Posterior vena cava (tissue), 2 donors: ENCODE measurements at regions of chr16 and their contacts with region 1.

Region 1: DNA sequence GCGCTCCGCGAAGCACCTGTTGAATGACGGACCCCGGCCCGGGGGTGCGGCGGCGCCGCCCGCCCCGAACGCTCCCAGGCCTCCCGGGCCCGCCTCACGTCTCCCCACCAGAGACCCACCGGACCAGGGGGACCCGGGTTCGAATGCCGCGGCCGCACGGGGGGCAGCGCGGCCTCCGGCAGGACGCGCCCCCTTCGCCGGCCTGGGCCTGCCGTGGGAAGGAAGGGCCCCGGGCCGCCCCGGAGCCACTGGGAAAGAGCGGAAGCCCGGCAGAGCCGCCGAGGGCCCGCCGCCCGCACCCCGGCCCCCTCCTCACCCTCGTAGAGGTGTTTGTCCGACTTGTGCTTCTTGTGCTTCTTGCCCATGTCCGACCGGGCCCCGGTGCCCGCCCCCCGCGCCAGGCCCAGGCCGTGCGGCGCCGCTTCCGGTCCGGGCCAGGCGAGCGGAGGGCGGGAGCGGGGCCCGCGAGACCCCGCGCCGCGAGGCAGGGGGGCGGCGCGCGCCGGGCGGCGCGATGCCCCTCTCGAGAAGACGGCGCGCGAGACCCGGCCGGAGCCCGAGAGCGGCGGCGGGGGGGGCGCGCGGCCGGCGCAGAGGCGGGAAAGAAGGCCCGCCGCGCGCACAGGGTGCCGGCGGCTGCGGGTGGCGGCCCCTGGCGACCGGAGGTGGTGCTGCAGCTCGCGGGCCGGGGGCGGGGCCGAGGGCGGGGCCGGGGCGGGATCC is at the start of gene BRD7:
- DNase-seq: peak; percentile 85
- total RNA-seq, gene BRD7: 54.5 to 71.3 TPM

Region 2: DNA sequence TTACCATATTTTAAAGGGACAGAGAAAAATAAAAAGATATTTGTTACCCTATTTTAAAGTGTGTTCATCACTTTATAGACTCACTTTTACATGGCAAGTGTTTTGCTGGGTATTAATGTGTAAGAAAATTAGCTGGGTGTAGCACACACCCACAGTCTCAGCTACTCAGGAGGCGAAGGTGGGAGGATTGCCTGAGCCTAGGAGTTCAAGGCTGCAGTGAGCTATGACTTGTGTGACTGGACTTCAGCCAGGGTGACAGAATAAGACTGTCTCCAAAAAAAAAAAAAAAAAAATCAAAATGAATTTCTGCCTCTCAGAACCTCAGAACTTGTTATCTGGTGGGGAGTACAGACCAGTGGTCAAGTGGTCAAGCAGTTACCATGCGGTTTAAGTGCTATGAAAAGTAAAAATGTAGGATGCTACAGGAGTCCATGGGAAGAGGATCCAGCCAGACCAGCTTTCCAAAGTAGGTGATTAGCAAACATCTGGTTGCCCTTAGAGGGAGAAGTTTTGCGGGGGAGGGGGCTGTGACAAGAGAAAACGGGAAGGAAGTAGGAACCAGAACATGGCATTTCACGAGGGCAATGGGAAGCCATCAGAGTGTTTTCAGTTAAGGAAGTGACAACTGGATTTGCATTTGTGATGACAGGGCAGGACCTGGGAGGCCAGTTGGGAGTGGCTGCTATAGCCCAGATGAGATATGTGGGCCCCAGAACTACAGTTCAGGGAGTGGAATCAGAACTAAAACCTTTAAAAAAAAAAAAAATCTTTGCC is 329.6 kb before region 1 on chr16:
- intact Hi-C with region 1: loop called in 1 of 2 experiments (anchors 10 kb)
- DNase-seq: no peak

Region 3: DNA sequence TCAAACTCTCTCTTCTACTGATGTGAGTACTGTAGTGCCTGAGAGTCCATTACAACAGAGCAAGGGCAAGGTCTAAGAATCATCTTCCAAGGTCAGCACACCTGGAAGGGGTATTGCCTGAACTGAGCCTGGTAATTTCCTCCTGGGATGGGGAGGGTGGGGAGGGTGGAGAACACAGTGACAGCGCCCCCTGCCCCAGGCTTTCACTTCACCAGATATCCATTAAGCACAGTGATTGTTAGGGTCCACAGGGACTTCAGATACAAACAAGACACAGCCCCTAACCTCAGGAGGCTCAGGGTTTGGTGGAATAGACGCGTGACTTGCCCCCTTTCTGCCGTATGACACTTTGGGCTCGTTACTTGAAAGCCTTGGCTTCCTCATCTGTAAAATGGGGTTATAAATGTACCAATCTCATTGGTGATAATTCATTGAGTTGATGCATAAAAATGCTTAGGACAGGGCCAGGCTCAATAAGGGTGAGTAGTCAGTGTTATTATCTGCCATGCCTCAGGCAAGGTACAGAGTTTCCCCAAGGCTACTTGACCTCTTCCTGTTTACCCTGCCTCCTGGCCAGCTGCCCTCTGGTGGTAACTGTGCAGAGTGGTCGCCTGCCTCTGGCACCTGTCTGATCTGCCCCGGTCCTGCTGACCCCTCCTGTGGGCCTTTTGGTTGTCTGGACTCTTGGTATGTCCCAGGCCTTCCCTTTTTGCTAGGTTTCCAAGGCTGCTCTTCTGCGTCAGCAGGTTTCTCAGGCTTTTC is 13.3 kb after region 1 on chr16:
- intact Hi-C with region 1: no loop called
- DNase-seq: no peak

Region 4: GRCh38 chr16:50665128-50665878 is 296.7 kb after region 1 on chr16:
- intact Hi-C with region 1: loop called (anchors 5 kb)
- DNase-seq: peak; percentile 93

Region 5: DNA sequence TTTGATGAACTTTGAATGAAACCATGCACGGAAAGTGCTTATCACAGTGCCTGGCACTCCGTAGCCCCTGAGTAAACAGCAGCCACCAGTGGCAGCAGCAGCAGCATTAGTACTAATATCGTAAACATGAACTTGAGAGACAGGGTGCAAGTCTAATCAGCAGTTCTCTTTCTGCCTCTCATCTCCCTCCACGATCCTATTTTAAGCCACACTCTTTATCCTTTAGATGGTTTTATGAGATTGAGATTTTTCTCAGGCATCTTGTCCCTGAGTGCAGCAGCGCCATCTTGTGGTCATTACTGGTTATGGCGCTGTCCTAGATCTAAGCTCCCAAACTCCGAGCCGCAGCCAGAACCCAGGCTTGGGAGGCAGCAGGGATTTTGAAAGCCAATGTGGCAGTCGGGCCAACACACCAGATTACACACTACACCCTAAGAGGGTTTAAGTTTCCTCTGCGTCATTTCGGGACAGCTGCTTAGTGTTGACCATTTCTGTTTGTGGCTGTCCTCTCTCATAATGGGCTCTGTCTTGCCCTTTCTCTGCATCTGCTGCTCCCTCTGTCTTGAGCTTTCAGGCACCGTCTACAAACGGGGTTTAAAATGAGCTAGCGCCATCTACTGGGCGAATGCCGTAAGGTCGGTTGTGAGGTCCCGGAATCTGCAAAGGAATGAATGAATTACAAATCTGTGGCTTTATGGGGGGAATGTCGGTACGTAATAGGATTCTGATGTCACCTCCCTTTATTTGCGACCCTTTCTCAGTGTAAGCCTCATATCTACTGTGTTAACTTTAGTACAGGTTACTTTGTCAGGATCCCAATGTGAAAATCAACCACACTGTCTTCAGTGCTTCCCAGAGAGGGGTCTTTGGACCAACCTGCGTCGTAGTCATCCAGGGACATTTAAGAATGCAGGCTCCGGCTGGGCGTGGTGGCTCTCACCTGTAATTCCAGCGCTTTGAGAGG is 437.8 kb after region 1 on chr16:
- intact Hi-C with region 1: loop called (anchors 5 to 10 kb)
- DNase-seq: peak; percentile 94